ENCODE measurements at regions of chr1 and their contacts with region 1.

Region 1: GRCh38 chr1:155208541-155209311 is at the start of gene MTX1:
- DNase-seq: peak; percentile 87
- H3K4me3 ChIP-seq: peak within 1 kb of the TSS; percentile 95
- H3K27ac ChIP-seq: peak within 1 kb of the TSS; percentile 93
- H3K4me1 ChIP-seq: peaks cover 16% of the 10 kb centered on the region
- H3K27me3 ChIP-seq: no peaks in the 10 kb centered on the region
- CTCF ChIP-seq: no peak
- total RNA-seq, gene MTX1: 65.2 and 75.9 TPM in 2 replicates

Region 2: GRCh38 chr1:155244368-155245162 is 35.8 kb after region 1 on chr1:
- CTCF ChIA-PET with region 1: interaction called, 4 read pairs
- POLR2A ChIA-PET with region 1: no interaction called
- intact Hi-C with region 1: loop called (anchors 5 kb)
- DNase-seq: peak; percentile 100
- H3K4me3 ChIP-seq: peak overlapping the region; percentile 56
- H3K27ac ChIP-seq: peak overlapping the region; percentile 86
- H3K4me1 ChIP-seq: peaks cover 30% of the 10 kb centered on the region
- H3K27me3 ChIP-seq: no peaks in the 10 kb centered on the region
- CTCF ChIP-seq: peak; percentile 51

Measured in A673 (cell line).